IMR-90 (cell line): ENCODE measurements at regions of chr19 and their contacts with region 1.

Region 1: DNA sequence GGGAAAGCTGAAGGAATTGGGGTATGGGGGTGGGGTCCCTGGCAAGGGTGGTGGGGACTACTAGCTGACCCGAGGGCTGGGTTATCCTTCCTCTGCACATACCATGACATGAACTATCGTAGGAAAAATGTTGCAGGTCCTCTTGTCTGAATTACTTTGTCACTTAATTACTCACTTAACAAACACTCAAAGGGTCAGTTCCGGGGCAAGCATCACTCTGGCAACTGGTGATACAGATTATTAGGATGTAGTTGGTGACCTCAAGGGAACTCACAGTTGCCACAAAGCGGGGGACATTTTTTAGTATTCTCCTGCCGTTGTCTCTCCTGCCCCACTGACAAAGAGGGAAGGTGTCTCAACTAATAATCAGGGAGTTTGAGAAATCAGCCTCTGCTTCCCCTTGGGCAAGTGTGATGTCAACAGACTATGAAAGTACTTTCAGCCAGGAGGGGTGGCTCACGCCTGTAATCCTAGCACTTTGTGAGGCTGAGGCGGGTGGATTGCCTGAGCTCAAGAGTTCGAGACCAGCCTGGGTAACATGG is 10.4 kb downstream of the DNAJB1 start:
- DNase-seq: peak; percentile 67
- ATAC-seq: peak; percentile 19
- H3K4me3 ChIP-seq: no peak overlapping the region
- H3K27ac ChIP-seq: peak overlapping the region; percentile 29
- H3K4me1 ChIP-seq: peaks cover 16% of the 10 kb centered on the region
- H3K27me3 ChIP-seq: no peaks in the 10 kb centered on the region
- CTCF ChIP-seq: no peak
- POLR2A ChIP-seq: no peak
- RAD21 ChIP-seq: no peak

Region 2: GRCh38 chr19:14517840-14518505 is 10.2 kb after region 1 on chr19 and contains the start of gene DNAJB1:
- CTCF ChIA-PET with region 1: no interaction called
- POLR2A ChIA-PET with region 1: interaction called, 20 read pairs
- dilution Hi-C with region 1: no loop called
- in situ Hi-C with region 1: no loop called
- intact Hi-C with region 1: no loop called
- DNase-seq: peak; percentile 64
- ATAC-seq: peak; percentile 80
- H3K4me3 ChIP-seq: peak within 1 kb of the TSS; percentile 85
- H3K27ac ChIP-seq: peak within 1 kb of the TSS; percentile 90
- H3K4me1 ChIP-seq: peaks cover 19% of the 10 kb centered on the region
- H3K27me3 ChIP-seq: no peaks in the 10 kb centered on the region
- CTCF ChIP-seq: no peak
- POLR2A ChIP-seq: peak; percentile 99
- RAD21 ChIP-seq: no peak
- total RNA-seq, gene DNAJB1: 82.5 and 88.2 TPM in 2 replicates